ENCODE measurements at regions of chr17 and their contacts with region 1.

Region 1: GRCh38 chr17:27332485-27333409 is 38.8 kb downstream of the WSB1 start:
- DNase-seq: peak; percentile 76 to 93 (median 91)
- ATAC-seq: peak; percentile 80
- H3K4me3 ChIP-seq: peak overlapping the region; percentile 52 to 58
- H3K4me3 Mint-ChIP-seq: peak overlapping the region; percentile 79
- H3K27ac ChIP-seq: peak overlapping the region; percentile 21 to 84
- H3K27ac Mint-ChIP-seq: peak overlapping the region; percentile 88
- H3K4me1 ChIP-seq: peaks cover 13% of the 10 kb centered on the region
- H3K4me1 Mint-ChIP-seq: peaks cover 16% of the 10 kb centered on the region
- H3K27me3 ChIP-seq: no peaks in the 10 kb centered on the region
- H3K27me3 Mint-ChIP-seq: no peaks in the 10 kb centered on the region
- CTCF ChIP-seq: peak; percentile 54

Region 2: DNA sequence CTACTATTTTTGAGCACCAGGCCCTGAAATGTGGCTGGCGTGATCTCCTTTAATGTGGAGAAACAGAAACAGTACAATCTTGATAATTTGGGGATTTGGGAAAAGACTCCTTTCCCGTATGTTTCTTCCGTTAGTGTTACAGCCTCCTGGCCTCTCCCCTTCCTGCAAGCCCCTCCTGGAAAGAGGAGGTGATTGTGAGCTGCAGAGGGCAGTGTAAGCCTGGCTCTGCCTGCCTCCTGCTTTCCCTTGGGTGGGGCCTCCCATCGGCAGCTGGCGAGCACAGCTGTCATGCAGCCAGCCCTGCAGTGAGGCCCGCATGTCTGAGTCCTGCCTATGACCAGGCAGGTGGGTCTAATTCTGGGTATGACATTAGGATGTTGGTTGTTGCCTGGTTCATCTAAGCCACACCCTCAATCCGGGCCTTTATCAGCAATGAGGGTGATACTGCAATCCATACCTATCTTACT is 87.5 kb before region 1 on chr17:
- CTCF ChIA-PET with region 1: interaction called, 15 read pairs
- POLR2A ChIA-PET with region 1: no interaction called
- intact Hi-C with region 1: loop called in 1 of 2 experiments (anchors 1 kb)
- DNase-seq: peak; percentile 6 to 64 (median 47)
- ATAC-seq: peak; percentile 73
- H3K4me3 ChIP-seq: no peak overlapping the region
- H3K4me3 Mint-ChIP-seq: no peak overlapping the region
- H3K27ac ChIP-seq: no peak overlapping the region
- H3K27ac Mint-ChIP-seq: no peak overlapping the region
- H3K4me1 ChIP-seq: no peaks in the 10 kb centered on the region
- H3K4me1 Mint-ChIP-seq: no peaks in the 10 kb centered on the region
- H3K27me3 ChIP-seq: no peaks in the 10 kb centered on the region
- H3K27me3 Mint-ChIP-seq: peaks cover 11% of the 10 kb centered on the region
- CTCF ChIP-seq: no peak

Region 3: DNA sequence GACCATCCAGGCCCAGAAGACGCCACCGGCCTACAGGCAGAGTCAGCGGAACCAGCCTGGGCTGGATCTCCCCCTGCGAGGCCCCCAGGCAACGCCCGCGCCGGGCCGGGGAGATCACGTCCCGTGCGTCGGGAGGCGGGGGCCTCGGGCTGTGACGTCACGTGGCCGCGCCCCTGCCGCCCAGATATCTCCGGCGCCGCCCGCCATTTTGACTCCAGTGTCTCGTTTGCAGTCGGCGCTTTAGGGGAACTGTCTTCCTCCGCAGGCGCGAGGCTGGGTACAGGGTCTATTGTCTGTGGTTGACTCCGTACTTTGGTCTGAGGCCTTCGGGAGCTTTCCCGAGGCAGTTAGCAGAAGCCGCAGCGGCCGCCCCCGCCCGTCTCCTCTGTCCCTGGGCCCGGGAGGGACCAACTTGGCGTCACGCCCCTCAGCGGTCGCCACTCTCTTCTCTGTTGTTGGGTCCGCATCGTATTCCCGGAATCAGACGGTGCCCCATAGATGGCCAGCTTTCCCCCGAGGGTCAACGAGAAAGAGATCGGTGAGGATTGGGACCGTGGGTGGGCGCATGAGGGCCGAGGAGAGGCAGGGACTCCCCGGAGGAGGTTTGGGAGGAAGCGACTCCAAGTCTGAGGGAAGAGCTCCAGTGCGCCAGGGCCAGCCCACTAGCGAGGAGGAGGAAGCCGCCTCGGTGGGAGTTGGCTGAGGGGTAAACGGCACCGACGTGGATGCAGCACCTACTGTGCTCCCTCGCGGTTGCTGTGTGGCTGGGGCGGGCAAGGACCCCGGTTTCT is 38.7 kb before region 1 on chr17 and contains the start of gene WSB1:
- CTCF ChIA-PET with region 1: interaction called, 6 read pairs
- POLR2A ChIA-PET with region 1: interaction called, 9 read pairs
- intact Hi-C with region 1: loop called (anchors 1 kb)
- DNase-seq: peak; percentile 86 to 97 (median 92)
- ATAC-seq: peak; percentile 84
- H3K4me3 ChIP-seq: peak within 1 kb of the TSS; percentile 89 to 99
- H3K4me3 Mint-ChIP-seq: peak within 1 kb of the TSS; percentile 93
- H3K27ac ChIP-seq: peak within 1 kb of the TSS; percentile 98 to 99
- H3K27ac Mint-ChIP-seq: peak within 1 kb of the TSS; percentile 100
- H3K4me1 ChIP-seq: peaks cover 27% of the 10 kb centered on the region
- H3K4me1 Mint-ChIP-seq: peaks cover 36% of the 10 kb centered on the region
- H3K27me3 ChIP-seq: no peaks in the 10 kb centered on the region
- H3K27me3 Mint-ChIP-seq: no peaks in the 10 kb centered on the region
- CTCF ChIP-seq: no peak
- total RNA-seq, gene WSB1: 89.0 to 91.1 TPM

Region 4: DNA sequence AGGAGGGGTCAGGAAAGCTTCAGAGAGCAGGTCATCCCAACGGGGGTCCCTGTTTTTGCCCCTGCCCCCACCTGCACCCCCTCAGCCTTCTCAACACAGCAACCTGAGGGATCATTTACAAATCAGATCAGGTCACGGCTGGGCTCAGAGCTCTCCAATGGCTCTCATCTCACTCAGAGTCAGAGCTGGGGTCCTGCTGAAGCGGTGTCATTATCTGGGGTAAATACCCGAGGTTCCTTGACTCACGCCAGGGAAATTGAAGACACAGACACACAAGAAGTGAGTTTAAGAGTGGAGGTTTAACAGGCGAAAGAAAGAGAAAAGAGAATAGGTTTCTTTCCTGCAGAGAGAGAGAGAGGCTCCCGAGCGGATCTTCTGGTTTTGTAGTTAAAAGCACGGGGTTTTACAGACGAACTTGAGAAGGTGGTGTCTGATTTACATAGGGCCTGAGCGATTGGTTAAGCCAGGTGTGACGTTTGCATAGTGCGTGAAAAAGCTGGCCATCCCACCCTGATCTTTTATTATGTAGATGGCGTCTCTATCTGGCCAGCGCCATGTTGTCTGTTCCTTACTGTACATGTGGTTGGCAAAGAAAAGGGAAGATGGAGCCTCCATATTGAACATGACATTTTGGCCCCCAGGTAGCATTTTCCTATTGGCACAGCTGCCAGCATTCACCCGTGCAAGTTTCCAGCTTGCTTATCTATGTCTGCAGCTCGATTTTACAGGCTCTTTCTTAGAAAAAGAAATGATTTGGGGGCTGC is 12.6 kb after region 1 on chr17:
- CTCF ChIA-PET with region 1: interaction called, 12 read pairs
- POLR2A ChIA-PET with region 1: interaction called, 3 read pairs
- intact Hi-C with region 1: no loop called
- DNase-seq: no peak
- ATAC-seq: no peak
- H3K4me3 ChIP-seq: no peak overlapping the region
- H3K4me3 Mint-ChIP-seq: no peak overlapping the region
- H3K27ac ChIP-seq: no peak overlapping the region
- H3K27ac Mint-ChIP-seq: no peak overlapping the region
- H3K4me1 ChIP-seq: peaks cover 8% of the 10 kb centered on the region
- H3K4me1 Mint-ChIP-seq: peaks cover 7% of the 10 kb centered on the region
- H3K27me3 ChIP-seq: no peaks in the 10 kb centered on the region
- H3K27me3 Mint-ChIP-seq: peaks cover 3% of the 10 kb centered on the region
- CTCF ChIP-seq: no peak

Region 5: DNA sequence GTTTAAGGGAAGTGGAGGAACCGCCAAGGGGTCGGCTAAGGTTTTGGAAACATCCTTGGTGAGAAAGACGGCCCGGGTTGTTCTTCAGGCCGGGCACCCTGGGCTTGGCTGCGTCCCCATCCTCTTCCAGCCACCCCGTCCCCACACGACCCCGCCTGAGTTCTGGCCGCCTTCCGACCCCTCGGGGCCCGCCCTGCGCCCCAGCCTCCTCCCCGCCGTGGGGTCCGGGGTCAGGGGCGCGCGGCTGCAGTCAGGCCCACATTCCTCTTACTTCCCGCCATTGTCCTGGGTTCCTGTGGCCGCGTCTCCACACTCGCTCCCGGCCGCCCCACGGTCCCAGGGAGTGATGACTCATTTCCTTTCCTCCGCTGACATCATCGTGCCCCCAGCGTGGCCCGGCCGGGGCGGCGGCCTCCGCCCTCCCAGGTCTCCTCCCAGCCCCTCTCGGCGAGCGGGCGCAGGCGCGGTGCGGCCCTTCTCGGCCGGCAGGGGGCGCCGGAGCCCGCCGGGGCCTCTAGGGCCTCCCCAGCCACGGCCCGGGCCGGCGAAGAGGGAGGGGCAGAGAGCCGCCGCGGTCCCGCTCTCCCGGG is 20.8 kb after region 1 on chr17:
- CTCF ChIA-PET with region 1: interaction called, 3 read pairs
- POLR2A ChIA-PET with region 1: no interaction called
- intact Hi-C with region 1: loop called in 1 of 2 experiments (anchors 1 kb)
- DNase-seq: peak; percentile 67 to 94 (median 86)
- ATAC-seq: peak; percentile 95
- H3K4me3 ChIP-seq: peak overlapping the region; percentile 66 to 78
- H3K4me3 Mint-ChIP-seq: peak overlapping the region; percentile 77
- H3K27ac ChIP-seq: peak overlapping the region; percentile 68 to 84
- H3K27ac Mint-ChIP-seq: peak overlapping the region; percentile 93
- H3K4me1 ChIP-seq: peaks cover 18% of the 10 kb centered on the region
- H3K4me1 Mint-ChIP-seq: peaks cover 17% of the 10 kb centered on the region
- H3K27me3 ChIP-seq: no peaks in the 10 kb centered on the region
- H3K27me3 Mint-ChIP-seq: no peaks in the 10 kb centered on the region
- CTCF ChIP-seq: peak; percentile 91

Region 6: GRCh38 chr17:27692766-27693165 is 360.0 kb after region 1 on chr17:
- CTCF ChIA-PET with region 1: no interaction called
- POLR2A ChIA-PET with region 1: no interaction called
- intact Hi-C with region 1: no loop called
- DNase-seq: no peak
- ATAC-seq: no peak
- H3K4me3 ChIP-seq: no peak overlapping the region
- H3K4me3 Mint-ChIP-seq: no peak overlapping the region
- H3K27ac ChIP-seq: no peak overlapping the region
- H3K27ac Mint-ChIP-seq: no peak overlapping the region
- H3K4me1 ChIP-seq: no peaks in the 10 kb centered on the region
- H3K4me1 Mint-ChIP-seq: no peaks in the 10 kb centered on the region
- H3K27me3 ChIP-seq: no peaks in the 10 kb centered on the region
- H3K27me3 Mint-ChIP-seq: peaks cover 8% of the 10 kb centered on the region
- CTCF ChIP-seq: no peak